Activated T-helper 1 cell treated with anti-CD3 and anti-CD28 coated beads, Interleukin-12 subunit alpha, Interleukin-12 subunit beta, Interleukin-2, Interleukin-4 antibody, amounts not matched to agents 30 ng/mL and 10 ng/mL and 1 ng/mL, durations not matched to agents 14 hours and 24 hours and 36 hours (primary cell): ENCODE measurements at regions of chr1 and their contacts with region 1.

Region 1: DNA sequence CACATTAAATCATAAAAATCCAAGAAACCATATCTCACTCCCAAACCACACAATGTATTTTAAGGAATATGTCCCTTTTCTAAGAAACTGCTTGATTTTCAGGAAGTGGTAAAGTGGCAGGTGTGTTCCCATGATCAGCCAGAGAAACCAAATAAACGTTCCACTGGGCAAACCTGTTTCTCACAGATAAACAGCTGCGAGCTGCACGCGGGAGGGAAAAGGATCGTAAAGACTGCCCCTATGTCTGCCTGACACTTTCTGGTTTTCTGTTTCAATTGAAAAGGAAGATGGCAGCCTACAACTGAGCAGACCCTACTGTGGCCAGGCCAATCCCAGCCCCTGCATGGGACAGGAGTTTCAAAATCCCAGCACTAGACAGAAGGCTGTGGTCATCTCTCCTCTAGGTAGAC is 36.6 kb downstream of the HIVEP3 start:
- DNase-seq: no peak
- H3K4me3 Mint-ChIP-seq: no peak overlapping the region
- H3K27ac Mint-ChIP-seq: peak overlapping the region; percentile 46
- H3K4me1 Mint-ChIP-seq: peaks cover 33% of the 10 kb centered on the region
- H3K27me3 Mint-ChIP-seq: no peaks in the 10 kb centered on the region

Region 2: GRCh38 chr1:41868599-41868998 is 13.5 kb before region 1 on chr1:
- intact Hi-C with region 1: loop called (anchors 1 kb)
- DNase-seq: peak; percentile 44
- H3K4me3 Mint-ChIP-seq: no peak overlapping the region
- H3K27ac Mint-ChIP-seq: peak overlapping the region; percentile 54
- H3K4me1 Mint-ChIP-seq: peaks cover 26% of the 10 kb centered on the region
- H3K27me3 Mint-ChIP-seq: no peaks in the 10 kb centered on the region

Region 3: DNA sequence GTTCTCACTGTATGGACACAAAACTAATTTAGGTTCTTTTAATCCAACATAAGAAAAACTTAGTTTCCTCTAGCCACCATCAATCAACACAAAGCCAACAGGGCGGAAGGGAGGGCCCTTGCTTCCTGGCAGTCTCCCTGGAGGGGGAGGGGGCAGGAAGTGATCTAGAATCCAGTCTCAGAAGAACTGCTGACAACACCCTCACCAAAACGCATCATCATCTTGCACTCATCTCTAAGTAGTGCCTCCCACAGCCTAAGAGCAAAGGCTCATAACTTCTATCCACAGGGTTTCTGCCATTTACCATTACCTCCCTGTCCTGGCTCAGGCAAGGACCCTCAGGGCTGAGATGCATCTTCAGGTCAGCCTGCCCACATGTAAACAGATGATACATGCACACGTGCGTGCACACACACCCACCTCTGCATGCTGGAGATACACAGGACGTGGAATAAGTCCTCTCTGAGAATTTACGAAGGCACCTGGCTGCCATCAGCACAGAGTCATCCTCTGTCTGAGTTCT is 16.2 kb after region 1 on chr1:
- intact Hi-C with region 1: no loop called
- DNase-seq: peak; percentile 77
- H3K4me3 Mint-ChIP-seq: peak overlapping the region; percentile 78
- H3K27ac Mint-ChIP-seq: peak overlapping the region; percentile 94
- H3K4me1 Mint-ChIP-seq: peaks cover 86% of the 10 kb centered on the region
- H3K27me3 Mint-ChIP-seq: no peaks in the 10 kb centered on the region